ENCODE measurements at regions of chr12 and their contacts with region 1.

Region 1: GRCh38 chr12:132866251-132866828 is 21.1 kb downstream of the CHFR start:
- DNase-seq: no peak
- ATAC-seq: no peak
- H3K4me3 ChIP-seq: no peak overlapping the region
- H3K4me3 Mint-ChIP-seq: no peak overlapping the region
- H3K27ac ChIP-seq: peak overlapping the region in 1 of 2 experiments; percentile 8
- H3K27ac Mint-ChIP-seq: peak overlapping the region; percentile 86
- H3K4me1 ChIP-seq: peaks cover 24% of the 10 kb centered on the region
- H3K4me1 Mint-ChIP-seq: peaks cover 26% of the 10 kb centered on the region
- H3K27me3 ChIP-seq: no peaks in the 10 kb centered on the region
- H3K27me3 Mint-ChIP-seq: no peaks in the 10 kb centered on the region
- CTCF ChIP-seq: no peak

Region 2: GRCh38 chr12:132847363-132848356 is 18.7 kb before region 1 on chr12:
- CTCF ChIA-PET with region 1: interaction called, 5 read pairs
- POLR2A ChIA-PET with region 1: interaction called, 7 read pairs
- intact Hi-C with region 1: loop called in 1 of 2 experiments (anchors 1 kb)
- DNase-seq: peak; percentile 13 to 76 (median 52)
- ATAC-seq: peak; percentile 90
- H3K4me3 ChIP-seq: no peak overlapping the region
- H3K4me3 Mint-ChIP-seq: peak overlapping the region; percentile 67
- H3K27ac ChIP-seq: peak overlapping the region in 1 of 2 experiments; percentile 13
- H3K27ac Mint-ChIP-seq: peak overlapping the region; percentile 95
- H3K4me1 ChIP-seq: peaks cover 24% of the 10 kb centered on the region
- H3K4me1 Mint-ChIP-seq: peaks cover 28% of the 10 kb centered on the region
- H3K27me3 ChIP-seq: no peaks in the 10 kb centered on the region
- H3K27me3 Mint-ChIP-seq: no peaks in the 10 kb centered on the region
- CTCF ChIP-seq: no peak

Measured in CD8-positive, alpha-beta T cell (primary cell).